Activated CD4-positive, alpha-beta T cell treated with anti-CD3 and anti-CD28 coated beads for 36 hours (primary cell): ENCODE measurements at regions of chr15 and their contacts with region 1.

Region 1: GRCh38 chr15:67085818-67086636 is 20.6 kb downstream of the SMAD3 start:
- DNase-seq: peak; percentile 53
- ATAC-seq: peak; percentile 40
- H3K4me3 Mint-ChIP-seq: peak overlapping the region; percentile 52
- H3K27ac Mint-ChIP-seq: peak overlapping the region; percentile 82
- H3K4me1 Mint-ChIP-seq: peaks cover 97% of the 10 kb centered on the region
- H3K27me3 Mint-ChIP-seq: no peaks in the 10 kb centered on the region

Region 2: DNA sequence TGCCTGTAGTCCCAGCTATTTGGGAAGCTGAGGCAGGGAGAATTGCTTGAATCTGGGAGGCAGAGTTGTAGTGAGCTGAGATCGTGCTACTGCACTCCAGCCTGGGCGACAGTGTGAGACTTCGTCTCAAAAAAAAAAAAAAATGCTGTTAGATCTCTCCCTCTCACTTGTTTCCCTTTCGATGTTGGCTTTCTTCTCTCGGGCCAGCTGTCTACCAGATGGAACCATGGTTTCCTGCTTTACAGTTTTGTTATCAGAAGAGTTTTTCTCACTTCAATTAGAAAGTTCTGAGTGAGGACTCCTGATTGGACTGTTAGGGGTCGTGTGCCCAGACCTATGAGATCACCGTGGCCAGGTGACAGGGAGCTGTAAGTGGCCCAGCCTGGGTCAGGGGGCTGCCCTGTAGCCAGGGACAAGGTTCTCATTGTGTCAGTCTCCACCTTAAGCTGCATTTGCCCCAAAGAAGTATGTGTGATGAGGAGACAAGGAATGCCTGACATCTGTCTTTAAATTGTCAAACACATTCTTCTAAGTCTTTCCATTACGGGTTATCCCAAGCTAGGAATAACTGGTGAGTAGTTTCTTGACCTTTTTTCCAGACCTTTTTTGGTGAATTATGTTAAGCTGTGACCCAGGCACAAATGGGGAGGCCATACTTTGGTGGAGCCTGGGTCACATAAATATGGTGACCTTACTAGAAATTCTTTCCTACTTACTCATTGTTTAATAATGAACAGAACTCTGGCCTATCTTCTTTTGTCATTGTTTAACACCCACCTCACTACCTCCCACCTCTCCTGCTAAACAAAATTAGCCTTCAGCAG is 613.6 kb before region 1 on chr15:
- CTCF ChIA-PET with region 1: no interaction called
- POLR2A ChIA-PET with region 1: no interaction called
- intact Hi-C with region 1: no loop called
- DNase-seq: peak; percentile 61
- ATAC-seq: peak; percentile 89
- H3K4me3 Mint-ChIP-seq: peak overlapping the region; percentile 53
- H3K27ac Mint-ChIP-seq: peak overlapping the region; percentile 87
- H3K4me1 Mint-ChIP-seq: peaks cover 56% of the 10 kb centered on the region
- H3K27me3 Mint-ChIP-seq: no peaks in the 10 kb centered on the region

Region 3: GRCh38 chr15:67024314-67024997 is 61.6 kb before region 1 on chr15:
- CTCF ChIA-PET with region 1: interaction called, 4 read pairs
- POLR2A ChIA-PET with region 1: no interaction called
- intact Hi-C with region 1: loop called in 1 of 2 experiments (anchors 1 kb)
- DNase-seq: peak; percentile 75
- ATAC-seq: peak; percentile 68
- H3K4me3 Mint-ChIP-seq: no peak overlapping the region
- H3K27ac Mint-ChIP-seq: peak overlapping the region; percentile 53
- H3K4me1 Mint-ChIP-seq: peaks cover 34% of the 10 kb centered on the region
- H3K27me3 Mint-ChIP-seq: peaks cover 6% of the 10 kb centered on the region

Region 4: DNA sequence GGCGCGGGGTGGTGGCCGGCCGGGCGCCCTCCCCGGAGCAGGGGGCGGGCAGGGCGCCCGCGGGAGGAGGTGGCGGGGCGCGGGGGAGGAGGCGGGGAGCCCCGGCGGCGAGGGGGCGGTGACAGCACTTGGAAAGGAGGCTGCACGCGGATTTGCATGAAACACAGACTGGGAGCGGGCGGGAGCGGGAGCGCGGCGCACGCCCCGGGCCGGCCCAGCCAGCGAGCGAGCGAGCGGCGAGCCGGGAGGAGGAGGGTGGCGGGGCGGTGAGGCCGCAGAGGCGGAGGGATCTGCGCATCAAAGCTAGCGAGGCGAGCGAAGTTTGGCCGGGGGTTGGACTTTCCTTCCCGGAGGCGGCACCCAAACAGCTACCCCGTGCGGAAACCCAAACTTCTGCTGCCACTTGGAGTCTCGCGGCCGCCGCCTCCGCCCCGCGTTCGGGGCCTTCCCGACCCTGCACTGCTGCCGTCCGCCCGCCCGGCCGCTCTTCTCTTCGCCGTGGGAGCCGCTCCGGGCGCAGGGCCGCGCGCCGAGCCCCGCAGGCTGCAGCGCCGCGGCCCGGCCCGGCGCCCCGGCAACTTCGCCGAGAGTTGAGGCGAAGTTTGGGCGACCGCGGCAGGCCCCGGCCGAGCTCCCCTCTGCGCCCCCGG is 20.5 kb before region 1 on chr15 and contains the start of gene SMAD3:
- CTCF ChIA-PET with region 1: interaction called, 45 read pairs
- POLR2A ChIA-PET with region 1: interaction called, 10 read pairs
- intact Hi-C with region 1: loop called (anchors 1 kb)
- DNase-seq: peak; percentile 85
- ATAC-seq: peak; percentile 39
- H3K4me3 Mint-ChIP-seq: peak within 1 kb of the TSS; percentile 91
- H3K27ac Mint-ChIP-seq: peak within 1 kb of the TSS; percentile 92
- H3K4me1 Mint-ChIP-seq: peaks cover 47% of the 10 kb centered on the region
- H3K27me3 Mint-ChIP-seq: peaks cover 17% of the 10 kb centered on the region
- total RNA-seq, gene SMAD3: 33.7 to 40.8 TPM

Region 5: GRCh38 chr15:67120839-67121643 is 35.0 kb after region 1 on chr15:
- CTCF ChIA-PET with region 1: interaction called, 3 read pairs
- POLR2A ChIA-PET with region 1: no interaction called
- intact Hi-C with region 1: loop called in 1 of 2 experiments (anchors 1 kb)
- DNase-seq: peak; percentile 93
- ATAC-seq: peak; percentile 88
- H3K4me3 Mint-ChIP-seq: peak overlapping the region; percentile 70
- H3K27ac Mint-ChIP-seq: peak overlapping the region; percentile 98
- H3K4me1 Mint-ChIP-seq: peaks cover 82% of the 10 kb centered on the region
- H3K27me3 Mint-ChIP-seq: no peaks in the 10 kb centered on the region

Region 6: GRCh38 chr15:67254238-67255175 is 168.5 kb after region 1 on chr15 and contains the starts of genes AAGAB and IQCH:
- CTCF ChIA-PET with region 1: interaction called, 3 read pairs
- POLR2A ChIA-PET with region 1: interaction called, 4 read pairs
- intact Hi-C with region 1: loop called in 1 of 2 experiments (anchors 1 kb)
- DNase-seq: peak; percentile 98
- ATAC-seq: peak; percentile 93
- H3K4me3 Mint-ChIP-seq: peak within 1 kb of the TSS; percentile 100
- H3K27ac Mint-ChIP-seq: peak within 1 kb of the TSS; percentile 99
- H3K4me1 Mint-ChIP-seq: peaks cover 37% of the 10 kb centered on the region
- H3K27me3 Mint-ChIP-seq: no peaks in the 10 kb centered on the region
- total RNA-seq, gene AAGAB: 43.9 to 48.6 TPM
- total RNA-seq, gene IQCH: 1.8 to 2.1 TPM

Region 7: GRCh38 chr15:67998599-67999122 is 912.6 kb after region 1 on chr15:
- CTCF ChIA-PET with region 1: no interaction called
- POLR2A ChIA-PET with region 1: no interaction called
- intact Hi-C with region 1: no loop called
- DNase-seq: no peak
- ATAC-seq: no peak
- H3K4me3 Mint-ChIP-seq: no peak overlapping the region
- H3K27ac Mint-ChIP-seq: no peak overlapping the region
- H3K4me1 Mint-ChIP-seq: no peaks in the 10 kb centered on the region
- H3K27me3 Mint-ChIP-seq: no peaks in the 10 kb centered on the region